Transverse colon (tissue), 4 donors: ENCODE measurements at regions of chr6 and their contacts with region 1.

Region 1: DNA sequence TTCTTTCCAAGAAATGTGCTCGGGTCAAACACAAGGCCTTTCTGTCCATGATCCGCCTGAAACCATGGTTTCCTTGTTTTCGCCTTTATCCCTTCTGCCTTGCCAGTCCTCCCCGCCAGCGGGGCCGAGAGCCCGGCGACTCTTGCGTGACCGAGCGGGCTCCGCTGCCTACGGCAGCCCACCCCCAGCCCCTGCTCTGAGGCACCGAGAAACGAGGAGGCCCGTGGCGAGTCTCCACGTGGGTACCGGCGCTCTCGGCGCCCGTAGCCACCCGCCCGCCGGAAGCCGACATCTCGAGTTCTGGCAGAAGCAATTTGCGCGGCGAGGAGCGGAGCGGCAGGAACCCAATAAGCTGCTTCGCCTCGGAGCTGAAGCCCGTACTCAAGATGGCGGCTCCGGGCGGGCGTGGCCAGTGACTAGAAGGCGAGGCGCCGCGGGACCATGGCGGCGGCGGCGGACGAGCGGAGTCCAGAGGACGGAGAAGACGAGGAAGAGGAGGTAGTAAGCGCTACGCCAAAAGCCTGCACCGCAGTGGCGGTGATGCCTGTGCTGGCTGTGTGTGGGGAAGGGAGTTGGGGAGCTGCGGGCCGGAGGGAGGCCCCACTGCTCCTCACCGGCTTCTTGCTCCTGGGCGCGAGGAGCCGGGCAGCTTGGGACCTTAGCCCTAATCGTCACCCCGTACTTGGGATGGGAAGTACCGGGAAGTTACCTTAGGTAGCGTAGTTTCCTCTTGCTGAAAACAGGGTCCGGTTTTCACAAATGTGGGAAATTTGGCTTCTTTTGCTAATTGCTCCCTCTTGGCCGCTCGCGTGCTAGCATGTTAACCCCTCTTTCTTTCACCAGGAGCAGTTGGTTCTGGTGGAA is at the start of gene GTF3C6:
- DNase-seq: peak; percentile 94
- H3K4me3 ChIP-seq: peak within 1 kb of the TSS; percentile 76 to 92 (median 90)
- H3K27ac ChIP-seq: peak within 1 kb of the TSS; percentile 91 to 93 (median 92)
- H3K4me1 ChIP-seq: peaks cover 0 to 20% (median 9%) of the 10 kb centered on the region in 4 donors
- H3K27me3 ChIP-seq: no peaks in the 10 kb centered on the region
- CTCF ChIP-seq: peak in 1 of 5 experiments; percentile 7
- EP300 ChIP-seq: no peak
- POLR2A ChIP-seq: peak; percentile 90
- total RNA-seq, gene GTF3C6: 13.5 to 53.4 (median 24.6) TPM

Region 2: DNA sequence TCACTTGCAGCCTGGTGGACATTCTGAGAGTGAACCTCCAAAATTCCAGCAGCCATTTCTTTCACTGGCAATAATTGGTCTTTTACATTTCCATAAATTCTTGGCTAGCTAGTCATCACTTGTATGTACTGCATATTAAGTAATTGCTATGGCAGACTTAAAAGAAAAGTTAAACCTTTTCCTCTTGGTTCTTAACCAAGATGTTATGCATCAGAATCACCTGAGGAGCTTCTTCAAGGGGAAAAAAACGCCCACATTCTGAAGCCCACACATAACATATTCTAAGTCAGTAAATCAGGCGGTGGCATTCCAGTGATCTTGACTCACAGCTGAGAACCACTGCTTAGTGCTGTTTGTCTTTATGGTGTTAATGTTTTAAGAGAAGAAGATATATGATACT is 741.3 kb before region 1 on chr6:
- in situ Hi-C with region 1: no loop called
- intact Hi-C with region 1: no loop called
- DNase-seq: no peak
- H3K4me3 ChIP-seq: no peak overlapping the region
- H3K27ac ChIP-seq: no peak overlapping the region
- H3K4me1 ChIP-seq: no peaks in the 10 kb centered on the region
- H3K27me3 ChIP-seq: no peaks in the 10 kb centered on the region
- CTCF ChIP-seq: no peak
- EP300 ChIP-seq: no peak
- POLR2A ChIP-seq: no peak

Region 3: GRCh38 chr6:110528101-110528929 is 430.2 kb before region 1 on chr6:
- in situ Hi-C with region 1: no loop called
- intact Hi-C with region 1: loop called (anchors 10 kb)
- DNase-seq: peak; percentile 29
- H3K4me3 ChIP-seq: no peak overlapping the region
- H3K27ac ChIP-seq: no peak overlapping the region
- H3K4me1 ChIP-seq: peaks cover 0 to 9% (median 0%) of the 10 kb centered on the region in 4 donors
- H3K27me3 ChIP-seq: no peaks in the 10 kb centered on the region
- CTCF ChIP-seq: peak; percentile 69 to 81 (median 73)
- EP300 ChIP-seq: no peak
- POLR2A ChIP-seq: no peak

Region 4: DNA sequence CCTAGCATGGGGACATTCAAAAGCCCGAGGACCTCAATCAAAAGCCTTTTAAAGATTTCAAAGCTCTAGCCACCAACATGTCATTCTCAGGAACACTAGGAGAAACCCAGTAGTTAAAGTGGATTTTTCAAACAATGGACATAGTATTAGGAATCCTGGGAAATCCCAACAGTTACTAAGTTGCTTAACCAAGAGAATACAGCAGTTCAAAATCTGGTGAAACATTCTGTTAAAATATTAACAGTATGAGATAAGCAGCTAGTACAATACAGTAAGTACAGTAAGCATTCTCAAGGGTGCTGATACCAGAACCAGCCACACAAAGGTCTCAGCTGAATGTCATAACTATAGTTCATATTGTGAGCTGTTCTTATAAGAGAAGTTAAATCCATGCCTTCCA is 211.9 kb before region 1 on chr6:
- in situ Hi-C with region 1: no loop called
- intact Hi-C with region 1: no loop called
- DNase-seq: no peak
- H3K4me3 ChIP-seq: no peak overlapping the region
- H3K27ac ChIP-seq: no peak overlapping the region
- H3K4me1 ChIP-seq: peaks cover 0 to 14% (median 0%) of the 10 kb centered on the region in 4 donors
- H3K27me3 ChIP-seq: no peaks in the 10 kb centered on the region
- CTCF ChIP-seq: no peak
- EP300 ChIP-seq: no peak
- POLR2A ChIP-seq: no peak